ENCODE measurements at regions of chr13 and their contacts with region 1.

Region 1: GRCh38 chr13:78909276-78909675 is 250.3 kb upstream of the OBI1 start:
- DNase-seq: no peak
- ATAC-seq: no peak
- H3K4me3 ChIP-seq: no peak overlapping the region
- H3K27ac ChIP-seq: no peak overlapping the region
- H3K4me1 ChIP-seq: no peaks in the 10 kb centered on the region
- H3K27me3 ChIP-seq: no peaks in the 10 kb centered on the region
- CTCF ChIP-seq: no peak

Region 2: GRCh38 chr13:78712831-78713230 is 196.4 kb before region 1 on chr13:
- CTCF ChIA-PET with region 1: no interaction called
- POLR2A ChIA-PET with region 1: interaction called, 10 read pairs
- in situ Hi-C with region 1: no loop called
- intact Hi-C with region 1: no loop called
- DNase-seq: no peak
- ATAC-seq: no peak
- H3K4me3 ChIP-seq: no peak overlapping the region
- H3K27ac ChIP-seq: no peak overlapping the region
- H3K4me1 ChIP-seq: no peaks in the 10 kb centered on the region
- H3K27me3 ChIP-seq: no peaks in the 10 kb centered on the region
- CTCF ChIP-seq: no peak

Measured in Panc1 (cell line).